Psoas muscle (tissue), 8 donors: ENCODE measurements at regions of chr6 and their contacts with region 1.

Region 1: DNA sequence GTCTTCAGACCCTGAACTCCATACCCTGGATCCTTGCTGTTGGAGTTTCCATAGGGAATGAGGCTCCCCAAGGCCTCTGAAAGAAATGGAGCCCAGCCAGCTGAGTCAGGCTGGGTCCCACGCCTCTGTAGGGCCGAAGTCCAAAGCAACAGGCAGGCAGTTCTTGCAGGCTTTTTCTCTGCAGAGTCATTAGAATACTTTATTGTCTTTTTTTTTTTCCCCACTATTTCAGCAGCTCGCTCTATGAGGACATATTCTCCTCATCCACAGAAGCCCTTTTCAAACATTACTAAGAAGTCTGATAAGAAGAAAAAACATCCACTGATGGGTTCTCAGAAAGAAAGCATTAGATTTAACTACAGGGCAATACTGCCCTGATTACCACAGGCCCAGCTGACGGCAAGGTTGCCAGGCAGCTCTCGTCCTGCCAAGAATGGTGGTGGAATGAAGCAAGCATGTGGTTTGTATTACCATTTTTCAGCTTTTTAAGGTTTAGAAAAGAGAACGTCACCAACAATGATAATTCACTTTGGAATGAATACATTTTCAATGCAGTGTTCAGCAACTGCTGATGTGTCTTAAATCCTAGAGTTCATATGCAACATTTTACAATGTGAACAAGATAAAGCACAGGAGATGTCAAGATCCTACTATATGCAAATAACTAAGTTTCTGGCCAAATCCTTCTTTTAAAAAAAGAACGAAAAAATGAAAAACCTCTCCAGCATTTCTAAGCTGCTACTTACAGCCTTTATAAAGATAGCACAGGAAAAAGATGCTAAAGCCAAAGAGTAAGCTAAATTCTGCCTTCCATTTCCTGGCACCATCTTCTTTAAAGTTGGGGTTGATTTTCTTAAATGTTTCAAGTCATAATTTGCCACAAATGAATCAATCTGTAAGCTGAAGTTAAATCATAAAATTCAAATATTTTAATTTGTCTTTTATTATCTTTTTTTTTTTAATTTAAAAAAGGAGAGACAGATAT is 223.6 kb upstream of the CITED2 start:
- DNase-seq: peak; percentile 77
- ATAC-seq: peak; percentile 78 to 88 (median 83)
- H3K4me3 ChIP-seq: peak overlapping the region; percentile 17
- H3K27ac ChIP-seq: peak overlapping the region; percentile 73
- H3K4me1 ChIP-seq: peaks cover 20% of the 10 kb centered on the region
- H3K27me3 ChIP-seq: no peaks in the 10 kb centered on the region
- CTCF ChIP-seq: no peak

Region 2: DNA sequence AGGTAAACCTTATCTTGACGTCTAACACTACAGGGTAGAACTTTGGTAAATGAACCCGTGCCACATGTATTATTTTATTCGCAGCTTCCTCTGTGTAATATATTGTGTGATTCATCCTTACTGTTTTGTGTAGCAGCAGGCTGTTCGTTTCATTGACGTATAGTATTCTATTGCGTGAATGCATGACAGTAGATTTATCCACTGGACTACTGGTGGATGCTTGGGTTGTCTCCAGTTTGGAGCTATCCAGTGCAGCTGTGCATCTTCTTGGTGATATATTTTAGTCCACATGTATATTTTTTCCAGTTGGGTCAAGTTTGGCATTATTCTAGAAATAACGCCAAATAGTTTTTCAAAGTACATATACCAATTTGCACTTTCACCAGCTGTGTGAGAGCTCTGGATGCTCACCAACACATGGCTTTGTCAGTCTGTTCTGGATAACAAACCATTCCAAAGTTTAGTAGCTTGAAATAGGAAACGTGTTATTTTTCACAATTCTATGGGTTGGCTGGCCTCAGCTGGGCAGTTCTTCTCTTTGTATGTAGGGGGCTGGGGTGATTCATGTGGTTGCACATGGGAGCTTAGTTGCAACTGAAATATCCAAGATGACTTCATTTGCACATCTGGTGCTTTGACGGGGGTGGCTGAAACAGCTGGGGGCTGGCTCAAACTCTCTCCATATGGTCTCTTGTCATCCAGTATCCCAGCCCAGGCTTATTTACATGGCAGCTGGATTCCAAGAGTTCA is 792.9 kb before region 1 on chr6:
- intact Hi-C with region 1: no loop called
- DNase-seq: peak in 1 of 2 donors; percentile 34
- ATAC-seq: peak in 2 of 4 donors; percentile 28 to 66
- H3K4me3 ChIP-seq: no peak overlapping the region
- H3K27ac ChIP-seq: no peak overlapping the region
- H3K4me1 ChIP-seq: no peaks in the 10 kb centered on the region
- H3K27me3 ChIP-seq: no peaks in the 10 kb centered on the region
- CTCF ChIP-seq: no peak

Region 3: DNA sequence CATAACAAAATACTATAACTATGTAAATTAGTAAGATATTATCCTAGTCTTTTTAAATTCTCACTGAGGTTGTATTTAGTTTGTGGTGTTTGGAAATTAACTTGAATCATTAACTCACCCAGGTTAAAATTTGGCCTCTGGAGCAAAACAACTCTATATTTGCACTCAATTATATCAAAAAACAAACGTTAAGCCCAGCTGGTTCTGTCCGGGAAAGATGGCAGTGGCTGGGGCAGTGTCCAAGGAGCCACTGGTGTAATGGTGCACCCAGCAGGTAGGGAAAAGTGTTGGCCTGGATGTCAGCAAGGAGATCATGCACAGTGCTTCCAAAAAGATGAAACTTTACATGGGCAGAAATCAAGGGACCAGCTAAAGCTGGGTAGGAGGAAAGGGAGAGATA is 61.6 kb after region 1 on chr6:
- intact Hi-C with region 1: loop called in 1 of 2 experiments (anchors 10 kb)
- DNase-seq: no peak
- ATAC-seq: no peak
- H3K4me3 ChIP-seq: no peak overlapping the region
- H3K27ac ChIP-seq: no peak overlapping the region
- H3K4me1 ChIP-seq: no peaks in the 10 kb centered on the region
- H3K27me3 ChIP-seq: no peaks in the 10 kb centered on the region
- CTCF ChIP-seq: no peak

Region 4: DNA sequence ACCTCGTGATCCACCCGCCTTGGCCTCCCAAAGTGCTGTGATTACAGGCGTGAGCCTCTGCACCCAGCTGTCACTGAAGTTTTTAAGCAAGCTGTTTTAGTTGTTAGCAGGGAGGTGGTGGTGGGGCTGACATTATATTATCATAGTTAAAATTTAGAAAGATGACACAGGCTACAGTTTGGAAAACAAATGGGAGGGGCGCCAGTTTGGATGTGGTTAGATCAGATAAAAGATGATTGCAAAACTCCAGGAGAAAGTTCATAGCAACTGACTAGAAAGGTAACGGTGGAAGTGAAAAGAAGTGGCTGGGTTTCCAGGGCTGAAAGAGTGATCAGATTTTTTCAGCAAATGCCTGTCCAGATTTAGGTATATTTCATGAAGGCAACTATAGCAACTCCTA is 88.2 kb after region 1 on chr6:
- intact Hi-C with region 1: loop called in 1 of 2 experiments (anchors 5 kb)
- DNase-seq: peak; percentile 44 to 53
- ATAC-seq: peak; percentile 92 to 97 (median 94)
- H3K4me3 ChIP-seq: no peak overlapping the region
- H3K27ac ChIP-seq: peak overlapping the region; percentile 73
- H3K4me1 ChIP-seq: peaks cover 2% of the 10 kb centered on the region
- H3K27me3 ChIP-seq: no peaks in the 10 kb centered on the region
- CTCF ChIP-seq: no peak